A549 (cell line): ENCODE measurements at regions of chr10 and their contacts with region 1.

Region 1: DNA sequence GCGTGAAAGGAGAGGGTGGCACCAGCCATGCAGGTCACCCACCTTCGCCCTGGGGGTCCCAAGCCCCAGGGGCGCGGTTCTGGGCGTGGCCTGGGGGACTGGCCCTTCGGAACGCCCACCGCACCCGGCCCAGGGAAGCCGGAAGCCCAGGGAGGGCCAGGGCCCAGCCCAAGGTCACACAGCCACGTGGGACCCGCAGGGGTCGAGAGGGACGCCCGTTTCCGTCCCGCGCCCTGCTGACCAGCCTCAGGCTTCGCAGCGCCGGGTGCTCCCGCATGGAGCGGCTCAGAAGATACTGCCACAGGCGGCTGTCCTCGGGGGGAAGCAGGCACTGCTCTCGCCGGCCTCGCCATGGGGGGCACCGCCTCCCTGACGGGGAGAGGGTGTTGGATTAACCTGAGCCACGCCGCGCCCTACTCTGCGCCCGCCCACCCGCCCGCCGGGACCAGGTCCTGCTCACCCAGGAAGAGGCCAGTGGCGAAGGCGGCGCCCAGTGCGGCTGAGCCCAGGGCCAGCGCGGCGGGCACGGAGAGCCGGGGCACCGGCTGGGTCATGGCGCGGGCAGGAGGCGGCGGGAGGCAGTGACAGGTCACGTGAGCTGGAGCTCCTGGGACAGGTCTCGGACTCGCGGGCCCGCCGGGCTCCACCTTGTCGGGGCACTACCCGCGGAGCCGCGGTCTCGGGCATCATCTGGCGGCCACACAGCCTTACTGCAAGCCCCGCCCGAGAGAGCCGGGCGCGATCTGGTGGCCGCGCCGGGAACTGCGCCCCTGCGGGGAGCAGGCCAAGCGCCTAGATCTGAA is at the start of gene COMTD1:
- DNase-seq: peak; percentile 95 to 96
- ATAC-seq: peak; percentile 63 to 78
- H3K4me3 ChIP-seq: peak within 1 kb of the TSS; percentile 78
- H3K27ac ChIP-seq: peak within 1 kb of the TSS; percentile 92 to 98
- H3K4me1 ChIP-seq: peaks cover 18% of the 10 kb centered on the region
- CTCF ChIP-seq: peak; percentile 100
- EP300 ChIP-seq: no peak
- POLR2A ChIP-seq: no peak; the same call in none of the 2 replicates
- RAD21 ChIP-seq: peak; percentile 95 to 100
- polyA plus RNA-seq, gene COMTD1: 9.5 and 9.8 TPM in 2 replicates

Region 2: DNA sequence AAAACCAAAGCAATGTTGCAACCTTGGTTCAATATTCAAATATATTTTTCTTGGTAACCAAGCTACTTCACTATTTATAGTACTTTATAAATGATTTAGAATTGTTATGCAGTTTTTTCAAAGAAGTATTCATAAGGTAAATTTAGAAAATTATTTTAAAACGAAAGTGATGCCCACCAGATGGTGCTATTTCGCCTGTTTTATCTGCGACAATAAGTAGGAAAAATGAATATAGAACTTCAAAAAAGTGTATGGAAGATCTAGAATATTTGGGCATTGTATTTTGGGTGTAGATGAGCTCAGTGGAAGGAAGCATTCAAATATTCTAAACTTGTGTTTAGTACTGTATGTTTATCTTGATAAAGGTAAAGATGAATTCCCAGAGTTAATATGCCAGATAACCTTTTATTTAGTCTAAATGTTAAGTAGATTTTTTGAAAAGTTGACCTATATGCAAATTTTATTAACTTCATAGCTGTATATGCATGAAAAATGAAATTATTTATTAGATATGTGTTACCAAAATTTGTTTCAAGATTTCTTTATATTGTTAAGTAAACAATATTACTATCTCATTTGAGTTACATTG is 991.4 kb before region 1 on chr10:
- CTCF ChIA-PET with region 1: interaction called, 44 read pairs
- POLR2A ChIA-PET with region 1: no interaction called
- DNase-seq: peak in 1 of 2 experiments; percentile 61
- ATAC-seq: no peak
- H3K4me3 ChIP-seq: no peak overlapping the region
- H3K27ac ChIP-seq: no peak overlapping the region
- H3K4me1 ChIP-seq: no peaks in the 10 kb centered on the region
- CTCF ChIP-seq: peak; percentile 85
- EP300 ChIP-seq: no peak
- POLR2A ChIP-seq: no peak
- RAD21 ChIP-seq: peak; percentile 67 to 78

Region 3: DNA sequence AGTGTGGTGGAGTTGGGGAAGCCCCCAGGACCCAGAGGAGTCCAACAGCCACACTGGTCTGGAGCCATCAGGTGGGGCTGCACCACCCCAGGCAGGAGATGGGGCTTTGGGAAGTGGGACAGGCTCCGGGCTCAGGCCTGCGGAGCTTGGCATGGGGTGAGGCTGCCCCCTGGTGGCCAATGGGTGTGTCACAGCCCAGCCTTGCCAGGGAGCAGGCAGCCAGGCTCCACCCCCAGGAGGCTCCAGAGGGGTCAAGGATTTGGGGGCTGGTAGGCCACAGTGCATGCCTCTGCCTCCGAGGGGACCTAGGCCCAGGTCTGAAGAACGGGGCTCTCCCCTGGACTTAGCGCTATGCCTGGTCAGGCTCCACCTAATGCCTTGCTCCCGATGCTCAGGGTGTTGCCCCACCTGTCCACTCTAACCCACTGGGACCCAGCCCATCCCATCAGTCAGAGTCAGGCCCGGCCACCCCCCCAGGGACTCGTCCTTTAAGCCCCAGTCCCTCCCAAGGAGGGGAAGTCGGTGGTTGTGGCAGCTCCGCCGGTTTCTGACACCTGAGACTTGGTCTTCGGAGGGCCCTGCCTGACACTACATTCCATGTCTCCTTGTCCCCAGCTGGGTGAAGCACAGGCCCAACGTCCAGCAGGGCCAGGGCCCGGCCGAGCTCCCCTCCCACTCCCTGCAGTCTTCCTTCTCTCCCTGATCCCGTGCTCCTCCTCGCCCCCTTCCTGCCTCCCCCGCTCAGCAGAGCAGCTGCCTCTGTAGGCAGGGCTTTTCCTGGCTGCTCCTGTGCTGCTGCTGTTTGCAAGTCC is 135.4 kb before region 1 on chr10:
- CTCF ChIA-PET with region 1: interaction called, 12 read pairs
- POLR2A ChIA-PET with region 1: no interaction called
- DNase-seq: peak; percentile 67 to 85
- ATAC-seq: peak; percentile 82 to 96
- H3K4me3 ChIP-seq: no peak overlapping the region
- H3K27ac ChIP-seq: peak overlapping the region in 1 of 2 experiments; percentile 55; a peak in 2 of 6 replicates
- H3K4me1 ChIP-seq: no peaks in the 10 kb centered on the region; the same call in 2 of the 3 replicates
- CTCF ChIP-seq: peak; percentile 94
- EP300 ChIP-seq: no peak
- POLR2A ChIP-seq: no peak
- RAD21 ChIP-seq: peak; percentile 97

Region 4: GRCh38 chr10:75187961-75188426 is 47.6 kb before region 1 on chr10:
- CTCF ChIA-PET with region 1: interaction called, 479 read pairs
- POLR2A ChIA-PET with region 1: interaction called, 13 read pairs
- DNase-seq: peak; percentile 65 to 83
- ATAC-seq: peak; percentile 32 to 41; a peak in 3 of 6 replicates
- H3K4me3 ChIP-seq: no peak overlapping the region
- H3K27ac ChIP-seq: peak overlapping the region; percentile 67 to 90; a peak in 5 of 6 replicates
- H3K4me1 ChIP-seq: peaks cover 74% of the 10 kb centered on the region
- CTCF ChIP-seq: peak; percentile 72
- EP300 ChIP-seq: no peak
- POLR2A ChIP-seq: no peak
- RAD21 ChIP-seq: peak; percentile 81 to 91

Region 5: DNA sequence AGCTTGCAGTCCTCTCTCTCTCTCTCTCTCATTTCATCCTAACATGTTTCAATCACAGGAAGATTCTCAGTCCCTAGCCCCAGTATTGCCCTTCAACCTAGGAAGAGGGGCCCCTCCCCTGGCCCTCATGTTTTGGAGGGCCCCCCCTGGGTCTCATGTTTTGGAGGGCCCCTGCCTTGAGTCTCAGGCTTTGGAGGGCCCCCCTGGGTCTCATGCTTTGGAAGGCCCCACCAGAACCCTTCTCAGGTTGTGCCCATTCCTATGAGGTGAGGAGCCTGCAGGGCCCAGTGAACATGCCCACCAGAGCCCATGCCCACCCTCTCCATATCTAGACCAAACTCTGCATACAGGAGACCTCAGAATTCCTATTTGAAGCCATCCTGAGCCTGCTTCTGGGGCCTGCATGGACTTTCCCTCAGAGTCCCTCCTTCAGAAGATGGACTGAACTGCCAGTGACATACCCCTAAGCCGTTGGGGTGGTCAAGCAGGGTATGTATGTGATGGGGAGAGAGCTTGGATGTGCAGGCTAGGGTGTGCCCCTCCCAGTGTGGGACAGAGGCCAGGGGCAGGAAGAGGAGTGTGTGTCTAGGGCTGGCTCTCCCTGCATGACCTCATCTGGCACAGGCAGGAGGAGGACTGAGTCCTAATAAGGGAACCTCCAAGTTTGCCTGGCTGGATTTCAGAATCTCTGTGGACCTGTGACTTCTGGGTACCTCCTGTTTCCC is 33.1 kb before region 1 on chr10:
- CTCF ChIA-PET with region 1: interaction called, 119 read pairs
- POLR2A ChIA-PET with region 1: interaction called, 4 read pairs
- DNase-seq: peak; percentile 40 to 81
- ATAC-seq: peak; percentile 79 to 90; a peak in 5 of 6 replicates
- H3K4me3 ChIP-seq: no peak overlapping the region
- H3K27ac ChIP-seq: peak overlapping the region; percentile 80 to 84
- H3K4me1 ChIP-seq: peaks cover 50% of the 10 kb centered on the region
- CTCF ChIP-seq: no peak
- EP300 ChIP-seq: no peak
- POLR2A ChIP-seq: no peak
- RAD21 ChIP-seq: no peak

Region 6: DNA sequence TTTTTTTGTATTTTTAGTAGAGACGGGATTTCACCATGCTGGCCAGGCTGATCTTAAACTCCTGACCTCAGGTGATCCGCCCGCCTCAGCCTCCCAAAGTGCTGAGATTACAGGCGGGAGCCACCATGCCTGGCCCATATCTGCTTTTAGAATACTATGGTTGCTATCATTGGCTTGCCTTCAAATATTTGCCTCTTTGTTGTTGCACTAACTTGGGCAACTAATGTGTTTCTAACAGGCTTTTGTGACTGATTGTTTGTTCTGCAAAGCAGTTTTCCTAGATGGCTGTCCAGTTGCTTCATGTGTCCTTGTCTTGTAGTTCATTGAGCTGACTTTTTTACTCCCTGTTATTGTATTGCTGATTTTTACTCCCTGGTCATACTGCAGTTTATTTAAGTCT is 15.3 kb before region 1 on chr10:
- CTCF ChIA-PET with region 1: interaction called, 80 read pairs
- POLR2A ChIA-PET with region 1: interaction called, 4 read pairs
- DNase-seq: no peak
- ATAC-seq: no peak
- H3K4me3 ChIP-seq: no peak overlapping the region
- H3K27ac ChIP-seq: no peak overlapping the region
- H3K4me1 ChIP-seq: peaks cover 41% of the 10 kb centered on the region
- CTCF ChIP-seq: no peak
- EP300 ChIP-seq: no peak
- POLR2A ChIP-seq: no peak
- RAD21 ChIP-seq: no peak

Region 7: GRCh38 chr10:75261813-75262708 is 26.5 kb after region 1 on chr10:
- CTCF ChIA-PET with region 1: interaction called, 16 read pairs
- POLR2A ChIA-PET with region 1: no interaction called
- DNase-seq: no peak
- ATAC-seq: no peak
- H3K4me3 ChIP-seq: no peak overlapping the region
- H3K27ac ChIP-seq: no peak overlapping the region
- H3K4me1 ChIP-seq: no peaks in the 10 kb centered on the region
- CTCF ChIP-seq: no peak
- EP300 ChIP-seq: no peak
- POLR2A ChIP-seq: no peak
- RAD21 ChIP-seq: no peak